MCF 10A (cell line): ENCODE measurements at regions of chr15 and their contacts with region 1.

Region 1: DNA sequence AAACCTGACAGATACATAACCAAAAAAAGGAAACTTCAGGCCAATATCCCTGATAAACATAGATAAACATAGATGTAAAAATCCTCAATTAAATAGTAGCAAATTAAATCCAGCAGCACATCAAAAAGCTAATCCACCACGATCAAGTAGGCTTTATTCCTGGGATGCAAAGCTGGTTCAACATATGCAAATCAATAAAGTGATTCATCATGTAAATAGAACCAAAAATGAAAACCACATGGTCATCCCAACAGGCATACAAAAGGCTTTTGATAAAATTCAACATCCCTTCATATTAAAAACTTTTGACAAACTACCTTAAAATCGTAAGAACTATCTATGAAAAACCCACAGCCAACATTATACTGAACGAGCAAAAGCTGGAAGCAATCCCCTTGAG is 882.2 kb downstream of the NTRK3 start:
- DNase-seq: no peak
- H3K4me3 Mint-ChIP-seq: no peak overlapping the region
- H3K27ac Mint-ChIP-seq: no peak overlapping the region
- H3K4me1 Mint-ChIP-seq: peaks cover 9% of the 10 kb centered on the region
- H3K27me3 Mint-ChIP-seq: no peaks in the 10 kb centered on the region
- CTCF ChIP-seq: no peak

Region 2: GRCh38 chr15:87292723-87293403 is 81.5 kb before region 1 on chr15:
- CTCF ChIA-PET with region 1: no interaction called
- POLR2A ChIA-PET with region 1: no interaction called
- intact Hi-C with region 1: no loop called
- DNase-seq: no peak
- H3K4me3 Mint-ChIP-seq: no peak overlapping the region
- H3K27ac Mint-ChIP-seq: no peak overlapping the region
- H3K4me1 Mint-ChIP-seq: no peaks in the 10 kb centered on the region
- H3K27me3 Mint-ChIP-seq: no peaks in the 10 kb centered on the region
- CTCF ChIP-seq: no peak

Region 3: DNA sequence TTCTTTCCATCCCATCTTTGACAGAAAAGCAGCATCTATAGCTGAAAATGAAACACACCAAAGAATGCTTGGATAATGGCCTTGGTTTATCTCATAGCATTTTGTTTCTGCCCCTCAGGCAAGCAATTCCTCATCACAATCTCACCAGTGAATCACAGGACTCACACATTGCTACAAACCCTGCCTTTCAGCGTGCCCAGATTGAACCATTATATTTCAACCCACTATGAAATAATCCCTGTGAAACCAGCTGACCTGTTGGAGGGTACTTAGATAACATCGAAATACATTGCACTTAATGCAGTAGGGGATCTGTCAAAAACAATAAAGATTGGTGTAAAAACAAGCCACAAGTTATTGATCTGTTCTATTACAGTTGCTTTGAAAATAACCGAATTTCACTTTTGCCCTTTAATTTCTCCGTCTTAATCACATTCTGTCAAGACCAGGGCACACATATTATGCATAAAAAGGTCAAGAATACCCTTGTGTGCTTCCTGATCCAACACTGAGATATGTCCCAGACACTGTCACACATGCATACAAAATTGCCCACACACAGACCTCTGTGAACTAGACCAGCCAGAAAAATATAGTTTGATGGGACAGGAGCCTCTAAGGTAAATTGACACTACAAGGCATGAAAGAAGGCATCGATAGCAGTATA is 42.4 kb after region 1 on chr15:
- CTCF ChIA-PET with region 1: no interaction called
- POLR2A ChIA-PET with region 1: no interaction called
- intact Hi-C with region 1: loop called (anchors 1 kb)
- DNase-seq: no peak
- H3K4me3 Mint-ChIP-seq: no peak overlapping the region
- H3K27ac Mint-ChIP-seq: no peak overlapping the region
- H3K4me1 Mint-ChIP-seq: no peaks in the 10 kb centered on the region
- H3K27me3 Mint-ChIP-seq: no peaks in the 10 kb centered on the region
- CTCF ChIP-seq: no peak